Gastrocnemius medialis (tissue), 4 donors: ENCODE measurements at regions of chr13 and their contacts with region 1.

Region 1: DNA sequence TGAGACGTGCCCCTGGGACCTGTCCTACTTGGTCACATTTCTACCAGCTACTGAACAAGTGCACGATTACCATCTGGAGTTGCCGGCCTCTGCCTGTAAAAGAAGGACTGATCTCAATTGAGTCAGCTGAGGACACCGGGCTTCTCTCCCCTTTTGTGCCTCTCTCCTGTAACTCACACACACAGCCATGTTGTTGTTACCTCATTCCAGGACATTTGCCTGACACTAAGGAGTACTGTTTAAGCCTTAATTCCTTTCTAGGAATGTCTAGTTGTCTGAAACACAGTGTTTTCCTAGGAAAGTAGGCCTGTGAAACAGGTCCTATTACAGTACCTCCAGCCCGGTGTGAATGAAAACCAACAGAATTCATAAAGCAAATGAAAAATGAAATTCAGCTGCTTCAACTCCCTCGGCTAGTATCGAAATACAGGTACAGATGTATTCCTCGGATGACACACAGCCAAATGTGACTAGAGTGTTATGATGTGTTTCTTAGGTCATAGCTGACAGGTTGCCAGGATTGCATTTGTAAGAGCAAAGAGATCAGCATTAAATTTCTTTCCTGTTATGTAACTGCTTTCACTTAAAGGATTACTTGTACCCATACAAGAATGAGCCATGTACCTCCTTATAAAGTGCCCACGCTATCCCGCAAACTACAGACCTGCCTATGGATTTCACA is 152.0 kb upstream of the IRS2 start:
- DNase-seq: peak; percentile 40 to 71
- ATAC-seq: peak; percentile 95 to 98
- H3K4me3 ChIP-seq: no peak overlapping the region
- H3K27ac ChIP-seq: peak overlapping the region; percentile 65 to 81 (median 70)
- H3K4me1 ChIP-seq: peaks cover 11% of the 10 kb centered on the region in 2 donors
- H3K27me3 ChIP-seq: no peaks in the 10 kb centered on the region
- CTCF ChIP-seq: no peak
- POLR2A ChIP-seq: peak; percentile 12 to 53

Region 2: GRCh38 chr13:110023729-110024644 is 85.6 kb after region 1 on chr13:
- in situ Hi-C with region 1: no loop called
- intact Hi-C with region 1: loop called (anchors 5 kb)
- DNase-seq: peak; percentile 39 to 46
- ATAC-seq: peak; percentile 85 to 93
- H3K4me3 ChIP-seq: no peak overlapping the region
- H3K27ac ChIP-seq: peak overlapping the region; percentile 74 to 90 (median 80)
- H3K4me1 ChIP-seq: peaks cover 17 to 18% of the 10 kb centered on the region in 2 donors
- H3K27me3 ChIP-seq: peaks cover 0 to 2% (median 0%) of the 10 kb centered on the region in 3 donors
- CTCF ChIP-seq: no peak
- POLR2A ChIP-seq: no peak